ENCODE measurements at regions of chr11 and their contacts with region 1.

Region 1: GRCh38 chr11:83827940-83828554 is 541.9 kb upstream of the CCDC90B start:
- DNase-seq: no peak
- H3K4me3 ChIP-seq: peak overlapping the region; percentile 37
- H3K27ac ChIP-seq: peak overlapping the region; percentile 65
- H3K27me3 ChIP-seq: no peaks in the 10 kb centered on the region
- CTCF ChIP-seq: peak; percentile 67

Region 2: GRCh38 chr11:83813296-83813695 is 14.8 kb before region 1 on chr11:
- CTCF ChIA-PET with region 1: interaction called, 51 read pairs
- POLR2A ChIA-PET with region 1: interaction called, 3 read pairs
- DNase-seq: no peak
- H3K4me3 ChIP-seq: no peak overlapping the region
- H3K27ac ChIP-seq: no peak overlapping the region
- H3K27me3 ChIP-seq: peaks cover 11% of the 10 kb centered on the region
- CTCF ChIP-seq: no peak

Region 3: DNA sequence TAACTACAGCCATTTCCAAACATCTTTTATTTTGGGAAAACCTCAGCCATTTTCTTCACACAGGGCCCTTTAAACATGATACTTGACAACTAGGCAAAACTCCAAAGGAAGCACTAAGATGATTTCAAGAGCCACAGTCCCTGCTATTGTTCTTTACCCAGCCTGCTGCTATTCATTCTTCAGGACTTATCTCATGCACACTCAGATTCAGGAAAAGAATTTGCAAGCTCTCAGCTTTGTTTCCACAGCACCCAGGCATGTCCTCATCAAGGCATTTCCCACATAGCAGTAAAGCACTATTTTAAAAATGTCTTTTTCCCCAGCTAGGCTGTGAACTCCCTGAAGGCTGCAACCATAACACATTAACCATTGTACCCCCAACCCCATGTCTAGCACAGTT is 67.5 kb after region 1 on chr11:
- CTCF ChIA-PET with region 1: no interaction called
- POLR2A ChIA-PET with region 1: no interaction called
- DNase-seq: no peak
- H3K4me3 ChIP-seq: no peak overlapping the region
- H3K27ac ChIP-seq: no peak overlapping the region
- H3K27me3 ChIP-seq: no peaks in the 10 kb centered on the region
- CTCF ChIP-seq: no peak

Region 4: DNA sequence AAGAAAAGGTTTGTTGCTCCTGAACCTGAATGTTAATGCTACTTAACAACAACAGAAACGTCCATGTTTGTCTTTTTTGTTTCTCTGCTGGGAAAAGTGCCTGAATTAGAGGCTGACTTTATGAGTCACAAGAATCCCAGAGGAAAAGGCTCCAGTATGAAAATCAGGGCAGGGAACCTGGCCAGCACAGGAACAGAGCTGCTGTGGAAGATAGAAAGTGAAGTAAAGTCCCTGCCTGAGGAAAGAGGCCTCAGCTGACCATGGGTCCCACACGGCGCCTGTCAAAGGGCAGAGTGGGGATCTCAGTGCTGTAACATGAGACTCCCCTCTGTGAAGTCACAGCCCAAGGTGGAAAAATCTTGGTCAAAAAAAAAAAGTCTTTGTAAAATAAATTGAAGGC is 90.4 kb after region 1 on chr11:
- CTCF ChIA-PET with region 1: no interaction called
- POLR2A ChIA-PET with region 1: no interaction called
- DNase-seq: no peak
- H3K4me3 ChIP-seq: no peak overlapping the region
- H3K27ac ChIP-seq: no peak overlapping the region
- H3K27me3 ChIP-seq: no peaks in the 10 kb centered on the region
- CTCF ChIP-seq: no peak

Region 5: DNA sequence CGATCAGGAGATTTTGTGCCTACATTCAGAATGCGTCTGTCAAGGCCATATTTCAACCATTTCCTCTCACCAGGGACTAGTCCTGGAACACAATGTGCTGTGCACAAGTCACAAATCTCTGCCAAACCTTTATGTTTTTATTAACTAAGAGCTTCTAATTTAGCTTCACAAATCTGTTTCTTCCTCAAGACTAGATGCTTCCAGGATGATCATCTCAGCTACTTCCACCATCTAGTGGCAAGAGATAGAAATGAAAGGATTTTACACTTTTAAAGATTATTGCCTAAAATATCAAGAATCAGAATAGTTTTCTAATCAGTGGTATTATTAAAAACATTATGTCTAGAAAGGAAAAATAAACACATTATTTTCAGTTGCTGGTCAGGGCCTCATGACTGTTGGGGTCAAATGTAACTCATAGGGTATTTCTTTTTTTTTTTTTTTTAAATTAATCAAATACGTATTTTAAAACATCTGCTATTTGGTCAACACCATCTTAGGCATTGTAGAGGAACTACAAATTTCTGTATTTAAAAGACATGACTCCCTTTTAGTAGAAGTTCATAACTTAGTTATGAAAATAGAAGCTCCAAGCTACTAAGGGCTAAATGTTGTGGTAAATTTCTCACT is 696.5 kb after region 1 on chr11:
- CTCF ChIA-PET with region 1: interaction called, 23 read pairs
- POLR2A ChIA-PET with region 1: no interaction called
- DNase-seq: no peak
- H3K4me3 ChIP-seq: no peak overlapping the region
- H3K27ac ChIP-seq: no peak overlapping the region
- H3K27me3 ChIP-seq: no peaks in the 10 kb centered on the region
- CTCF ChIP-seq: peak; percentile 62

Region 6: GRCh38 chr11:84564180-84564866 is 736.3 kb after region 1 on chr11:
- CTCF ChIA-PET with region 1: interaction called, 14 read pairs
- POLR2A ChIA-PET with region 1: no interaction called
- DNase-seq: peak; percentile 6
- H3K4me3 ChIP-seq: no peak overlapping the region
- H3K27ac ChIP-seq: no peak overlapping the region
- H3K27me3 ChIP-seq: no peaks in the 10 kb centered on the region
- CTCF ChIP-seq: peak; percentile 87

Measured in AG04450 (cell line).